ENCODE measurements at regions of chr13 and their contacts with region 1.

Region 1: DNA sequence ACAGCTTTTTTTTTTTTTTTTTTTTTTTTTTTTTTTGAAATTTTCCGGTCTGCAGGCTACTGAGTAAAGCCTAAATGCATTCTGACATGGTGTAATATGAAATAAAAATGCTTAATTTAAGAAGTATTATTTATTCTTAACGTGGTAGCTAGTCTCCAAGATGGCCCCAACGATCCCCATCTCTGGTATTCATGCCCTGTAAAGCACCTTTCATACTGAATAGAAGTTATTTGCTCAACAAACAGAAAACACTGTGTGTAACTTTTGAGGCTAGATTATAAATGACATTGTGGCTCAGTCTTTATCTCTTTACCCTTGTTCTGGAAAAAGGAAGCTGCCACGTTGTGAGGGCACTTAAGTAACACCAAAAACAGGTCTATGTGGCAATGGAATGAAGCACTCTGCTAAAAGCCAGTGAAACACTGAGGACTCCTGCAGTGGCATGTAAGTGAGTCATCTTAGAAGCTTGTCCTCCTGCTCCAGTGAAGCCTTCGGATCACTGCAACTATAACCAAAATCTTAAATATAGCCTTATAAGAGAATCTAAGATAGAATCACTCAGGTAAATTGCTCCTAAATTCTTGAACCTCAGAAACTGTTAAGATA is 128.7 kb downstream of the UGGT2 start:
- DNase-seq: peak; percentile 51 to 57
- H3K4me3 ChIP-seq: no peak overlapping the region
- H3K4me3 Mint-ChIP-seq: no peak overlapping the region
- H3K27ac Mint-ChIP-seq: no peak overlapping the region
- H3K4me1 ChIP-seq: peaks cover 14% of the 10 kb centered on the region; the same call in 1 of the 2 replicates
- H3K4me1 Mint-ChIP-seq: peaks cover 5% of the 10 kb centered on the region
- H3K27me3 ChIP-seq: no peaks in the 10 kb centered on the region
- H3K27me3 Mint-ChIP-seq: no peaks in the 10 kb centered on the region
- CTCF ChIP-seq: no peak

Region 2: DNA sequence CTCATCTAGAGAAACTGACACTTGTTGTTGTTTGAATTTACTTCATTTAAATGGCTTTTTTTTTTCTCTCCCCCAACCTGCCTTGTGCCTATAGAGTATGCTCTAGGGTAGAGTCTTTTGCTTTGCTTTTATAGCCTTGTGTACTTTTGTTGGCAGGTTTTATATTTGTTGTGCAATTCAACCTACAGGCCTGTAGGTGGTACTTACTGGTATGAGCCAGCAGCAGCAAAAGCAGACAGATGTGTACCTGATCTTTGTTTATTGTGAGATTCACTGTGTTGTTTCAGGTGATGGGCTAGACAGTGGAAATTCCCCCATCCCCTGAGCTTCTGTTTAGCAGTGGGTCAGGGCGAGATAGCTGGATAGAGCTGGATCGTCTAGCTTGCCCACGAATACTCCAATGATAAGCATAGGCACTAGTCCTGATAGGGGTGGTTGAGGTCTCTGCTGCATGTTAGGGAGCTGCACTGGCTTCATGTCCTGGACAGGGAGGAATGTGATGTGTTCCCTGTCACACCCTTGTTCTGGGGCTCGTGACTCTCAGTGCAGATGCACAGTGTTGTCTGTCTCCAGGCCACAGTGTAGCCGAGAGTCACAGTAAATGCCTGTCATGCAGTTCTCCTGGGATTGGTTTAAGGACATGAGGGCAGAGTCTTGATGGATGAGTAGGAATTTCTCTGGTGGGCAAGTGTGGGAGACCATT is 226.3 kb before region 1 on chr13:
- CTCF ChIA-PET with region 1: no interaction called
- POLR2A ChIA-PET with region 1: no interaction called
- intact Hi-C with region 1: no loop called
- DNase-seq: no peak
- H3K4me3 ChIP-seq: no peak overlapping the region
- H3K4me3 Mint-ChIP-seq: no peak overlapping the region
- H3K27ac Mint-ChIP-seq: no peak overlapping the region
- H3K4me1 ChIP-seq: 0 out of 2 replicates have a peak, but pooled peaks cover 6% of the 10 kb centered on the region
- H3K4me1 Mint-ChIP-seq: peaks cover 13% of the 10 kb centered on the region
- H3K27me3 ChIP-seq: no peaks in the 10 kb centered on the region
- H3K27me3 Mint-ChIP-seq: no peaks in the 10 kb centered on the region
- CTCF ChIP-seq: peak; percentile 23 to 51

Region 3: DNA sequence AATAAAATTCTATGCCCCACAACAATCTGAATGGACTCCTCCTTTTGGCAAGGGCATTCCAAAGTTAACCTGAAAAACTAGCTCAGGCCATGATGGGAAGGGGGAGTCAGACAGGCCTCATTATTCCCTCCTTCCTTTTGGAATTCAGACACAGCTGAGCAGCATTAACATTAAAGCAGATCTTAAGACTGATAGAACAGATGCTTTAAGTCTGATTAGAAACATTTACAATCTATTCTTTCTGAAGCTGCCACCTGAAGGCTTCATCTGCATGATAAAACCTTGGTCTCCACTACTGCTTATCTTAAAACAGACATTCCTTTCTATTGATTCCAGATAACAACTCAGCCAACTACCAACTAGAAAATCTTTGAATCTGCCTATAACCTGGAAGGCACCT is 29.8 kb after region 1 on chr13:
- CTCF ChIA-PET with region 1: no interaction called
- POLR2A ChIA-PET with region 1: no interaction called
- intact Hi-C with region 1: loop called (anchors 1 kb)
- DNase-seq: peak; percentile 55
- H3K4me3 ChIP-seq: no peak overlapping the region
- H3K4me3 Mint-ChIP-seq: no peak overlapping the region
- H3K27ac Mint-ChIP-seq: peak overlapping the region; percentile 80
- H3K4me1 ChIP-seq: peaks cover 36% of the 10 kb centered on the region
- H3K4me1 Mint-ChIP-seq: peaks cover 31% of the 10 kb centered on the region
- H3K27me3 ChIP-seq: no peaks in the 10 kb centered on the region
- H3K27me3 Mint-ChIP-seq: no peaks in the 10 kb centered on the region
- CTCF ChIP-seq: no peak

Measured in Caco-2 (cell line).